ENCODE measurements at regions of chr21 and their contacts with region 1.

Region 1: GRCh38 chr21:43975495-43975993 is 36.6 kb upstream of the TRAPPC10 start:
- DNase-seq: peak; percentile 78
- ATAC-seq: peak; percentile 50
- H3K4me3 ChIP-seq: no peak overlapping the region
- H3K27ac ChIP-seq: no peak overlapping the region
- H3K4me1 ChIP-seq: peaks cover 26% of the 10 kb centered on the region
- H3K27me3 ChIP-seq: no peaks in the 10 kb centered on the region
- CTCF ChIP-seq: peak; percentile 96

Region 2: DNA sequence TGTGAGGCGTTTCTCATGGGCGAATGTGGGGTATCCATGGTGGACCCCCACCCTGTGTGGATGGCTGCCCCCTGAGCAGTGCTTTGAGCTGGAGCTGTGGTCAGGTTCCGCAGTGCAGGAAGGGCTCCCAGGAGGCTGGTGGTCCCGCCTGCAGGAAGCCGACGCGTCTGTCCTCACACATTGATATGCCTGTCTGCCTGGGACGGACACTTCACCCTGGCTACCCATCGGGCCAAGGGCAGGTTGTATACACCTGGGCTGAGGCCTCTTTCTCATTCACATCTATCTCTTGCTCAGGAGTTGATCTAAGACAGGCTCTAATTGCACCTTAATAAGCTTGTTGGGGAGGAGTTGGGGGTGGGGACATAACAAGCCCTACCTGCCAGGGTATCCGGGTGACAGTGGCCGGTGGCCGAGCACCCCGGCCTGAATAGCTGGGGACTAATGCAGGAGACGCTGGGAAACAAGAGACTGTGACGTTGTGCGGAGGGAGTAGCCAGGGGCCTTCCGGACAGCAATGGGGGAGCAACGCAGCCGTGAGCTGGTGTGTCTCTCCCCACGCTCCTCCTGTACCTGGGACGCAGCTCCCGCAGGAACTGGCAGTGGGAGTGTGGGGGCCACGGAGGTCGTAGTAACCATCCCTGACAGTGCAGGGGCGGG is 234.9 kb before region 1 on chr21:
- CTCF ChIA-PET with region 1: no interaction called
- POLR2A ChIA-PET with region 1: no interaction called
- intact Hi-C with region 1: no loop called
- DNase-seq: no peak
- ATAC-seq: peak; percentile 42
- H3K4me3 ChIP-seq: no peak overlapping the region
- H3K27ac ChIP-seq: no peak overlapping the region
- H3K4me1 ChIP-seq: 0 out of 2 replicates have a peak, but pooled peaks cover 3% of the 10 kb centered on the region
- H3K27me3 ChIP-seq: no peaks in the 10 kb centered on the region
- CTCF ChIP-seq: no peak

Region 3: DNA sequence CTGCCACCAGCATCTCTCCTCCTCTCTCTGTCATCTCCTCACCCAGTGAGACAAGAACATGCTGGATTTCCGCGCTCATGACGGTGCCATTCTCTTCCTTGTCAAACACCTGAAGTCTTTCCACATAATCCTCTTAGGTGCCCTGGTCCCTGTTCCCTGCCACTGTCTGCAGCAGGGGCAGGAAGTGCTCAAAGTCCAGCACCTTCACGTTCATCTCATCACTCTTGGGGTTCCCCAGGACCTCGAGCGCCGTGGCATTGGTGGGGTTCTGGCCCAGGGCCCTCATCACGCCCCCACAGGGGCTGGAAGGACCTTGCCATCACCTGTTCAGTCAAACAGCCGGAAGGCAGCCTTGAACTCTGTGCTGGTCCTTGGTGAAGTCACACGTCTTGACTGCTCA is 119.6 kb before region 1 on chr21:
- CTCF ChIA-PET with region 1: no interaction called
- POLR2A ChIA-PET with region 1: interaction called, 11 read pairs
- intact Hi-C with region 1: no loop called
- DNase-seq: no peak
- ATAC-seq: no peak
- H3K4me3 ChIP-seq: no peak overlapping the region
- H3K27ac ChIP-seq: no peak overlapping the region
- H3K4me1 ChIP-seq: peaks cover 10% of the 10 kb centered on the region; the same call in 1 of the 2 replicates
- H3K27me3 ChIP-seq: no peaks in the 10 kb centered on the region
- CTCF ChIP-seq: no peak

Region 4: DNA sequence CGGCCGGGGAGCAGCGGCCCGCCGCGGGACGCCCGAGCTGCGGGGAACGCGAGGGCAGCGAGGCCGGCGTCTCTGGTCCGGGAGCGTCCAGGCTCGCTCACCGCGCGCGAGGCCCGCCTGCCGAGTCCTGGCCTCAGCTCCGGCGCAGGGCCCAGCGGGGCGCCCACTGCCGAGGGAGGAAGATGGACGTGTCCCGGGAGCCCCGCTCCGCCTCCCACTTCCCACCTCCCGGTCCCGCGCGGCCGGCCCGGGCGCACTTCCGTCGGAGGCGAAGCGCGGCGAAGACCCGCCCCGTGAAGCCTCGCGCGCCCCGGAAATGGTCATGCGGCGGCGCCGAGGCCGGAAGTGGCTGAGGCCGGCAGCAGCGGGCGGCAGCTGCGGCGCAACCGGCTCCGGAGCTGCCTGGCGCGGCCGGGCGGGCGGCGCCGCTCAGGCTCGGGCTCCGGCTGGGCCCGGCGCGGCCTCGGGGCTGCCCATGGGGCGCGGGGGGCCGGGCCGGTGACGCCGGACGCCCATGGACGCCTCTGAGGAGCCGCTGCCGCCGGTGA is 36.5 kb after region 1 on chr21 and contains the start of gene TRAPPC10:
- CTCF ChIA-PET with region 1: interaction called, 3 read pairs
- POLR2A ChIA-PET with region 1: interaction called, 7 read pairs
- intact Hi-C with region 1: loop called (anchors 2 kb)
- DNase-seq: peak; percentile 92
- ATAC-seq: peak; percentile 88
- H3K4me3 ChIP-seq: peak within 1 kb of the TSS; percentile 93
- H3K27ac ChIP-seq: peak within 1 kb of the TSS; percentile 56
- H3K4me1 ChIP-seq: peaks cover 21% of the 10 kb centered on the region
- H3K27me3 ChIP-seq: no peaks in the 10 kb centered on the region
- CTCF ChIP-seq: no peak
- total RNA-seq, gene TRAPPC10: 28.9 and 31.4 TPM in 2 replicates

Region 5: DNA sequence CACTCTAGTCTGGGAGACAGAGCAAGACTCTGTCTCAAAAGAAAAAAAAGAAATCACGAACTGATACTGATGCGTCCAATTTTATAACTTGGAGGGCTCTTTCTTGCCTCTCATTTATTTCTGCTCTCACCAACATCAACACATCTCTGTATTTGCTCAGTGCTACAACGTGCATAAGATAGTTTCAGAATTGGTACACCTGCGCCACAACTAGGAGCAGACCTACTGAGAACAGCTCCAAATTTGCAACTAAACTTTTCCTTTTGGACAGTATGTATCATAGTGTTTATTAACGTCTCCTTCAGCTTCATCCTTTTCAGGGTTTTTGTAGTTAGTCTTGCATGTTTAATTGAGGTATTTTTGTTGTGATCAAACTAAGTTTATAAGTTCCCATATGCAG is 64.3 kb after region 1 on chr21:
- CTCF ChIA-PET with region 1: no interaction called
- POLR2A ChIA-PET with region 1: no interaction called
- intact Hi-C with region 1: no loop called
- DNase-seq: no peak
- ATAC-seq: no peak
- H3K4me3 ChIP-seq: no peak overlapping the region
- H3K27ac ChIP-seq: no peak overlapping the region
- H3K4me1 ChIP-seq: no peaks in the 10 kb centered on the region
- H3K27me3 ChIP-seq: no peaks in the 10 kb centered on the region
- CTCF ChIP-seq: no peak